Activated CD4-positive, alpha-beta memory T cell treated with anti-CD3 and anti-CD28 coated beads for 36 hours (primary cell): ENCODE measurements at regions of chr13 and their contacts with region 1.

Region 1: DNA sequence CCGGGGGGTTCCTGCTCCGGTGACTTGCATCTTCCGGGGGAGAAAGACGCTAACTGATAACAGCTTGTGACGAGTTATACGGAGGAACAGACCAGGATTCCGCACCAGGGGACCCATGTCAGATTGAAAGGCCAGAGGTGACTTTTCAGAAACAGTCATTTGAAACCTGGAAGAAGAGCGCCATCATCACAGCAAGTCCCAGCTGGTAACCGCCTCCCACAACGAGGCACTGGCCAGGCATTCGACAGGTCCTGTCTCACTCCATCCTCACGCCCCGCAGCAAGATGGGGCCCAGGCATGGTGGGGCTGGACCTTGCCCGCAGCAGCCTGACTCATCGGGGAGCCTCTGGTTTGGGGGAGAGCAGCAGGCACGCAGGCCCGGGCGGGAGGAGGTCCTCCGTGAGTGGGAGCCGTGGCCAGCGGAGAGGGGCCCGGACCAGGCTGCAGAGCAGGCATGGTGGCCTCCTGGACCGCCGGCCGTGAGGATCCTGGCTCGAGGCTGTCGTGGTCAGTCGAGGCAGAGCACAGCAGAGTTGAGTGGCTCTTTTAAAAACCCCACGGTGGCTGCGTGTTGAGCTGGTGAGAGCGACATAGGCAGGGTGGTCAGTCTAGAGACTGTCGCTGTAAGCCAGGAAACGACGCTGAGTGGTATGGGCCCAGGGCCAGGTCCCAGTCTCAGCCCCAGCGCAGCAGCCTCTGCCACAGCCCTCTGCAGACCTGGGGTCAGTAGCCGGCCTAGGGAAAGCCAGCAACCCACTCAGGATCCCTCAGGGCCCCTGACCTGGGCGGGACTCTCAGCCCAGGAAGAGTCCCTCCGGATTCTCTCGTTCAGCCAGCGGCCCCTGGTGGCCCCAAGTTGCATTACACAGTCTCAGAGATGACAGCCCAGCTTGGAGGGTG is 94.9 kb upstream of the MCF2L start:
- DNase-seq: peak; percentile 82
- H3K4me3 Mint-ChIP-seq: no peak overlapping the region
- H3K27ac Mint-ChIP-seq: peak overlapping the region; percentile 72
- H3K4me1 Mint-ChIP-seq: peaks cover 20% of the 10 kb centered on the region
- H3K27me3 Mint-ChIP-seq: no peaks in the 10 kb centered on the region

Region 2: GRCh38 chr13:112616586-112617362 is 257.3 kb before region 1 on chr13:
- CTCF ChIA-PET with region 1: interaction called, 7 read pairs
- POLR2A ChIA-PET with region 1: no interaction called
- intact Hi-C with region 1: loop called (anchors 1 kb)
- DNase-seq: peak; percentile 41
- H3K4me3 Mint-ChIP-seq: no peak overlapping the region
- H3K27ac Mint-ChIP-seq: no peak overlapping the region
- H3K4me1 Mint-ChIP-seq: no peaks in the 10 kb centered on the region
- H3K27me3 Mint-ChIP-seq: peaks cover 8% of the 10 kb centered on the region

Region 3: DNA sequence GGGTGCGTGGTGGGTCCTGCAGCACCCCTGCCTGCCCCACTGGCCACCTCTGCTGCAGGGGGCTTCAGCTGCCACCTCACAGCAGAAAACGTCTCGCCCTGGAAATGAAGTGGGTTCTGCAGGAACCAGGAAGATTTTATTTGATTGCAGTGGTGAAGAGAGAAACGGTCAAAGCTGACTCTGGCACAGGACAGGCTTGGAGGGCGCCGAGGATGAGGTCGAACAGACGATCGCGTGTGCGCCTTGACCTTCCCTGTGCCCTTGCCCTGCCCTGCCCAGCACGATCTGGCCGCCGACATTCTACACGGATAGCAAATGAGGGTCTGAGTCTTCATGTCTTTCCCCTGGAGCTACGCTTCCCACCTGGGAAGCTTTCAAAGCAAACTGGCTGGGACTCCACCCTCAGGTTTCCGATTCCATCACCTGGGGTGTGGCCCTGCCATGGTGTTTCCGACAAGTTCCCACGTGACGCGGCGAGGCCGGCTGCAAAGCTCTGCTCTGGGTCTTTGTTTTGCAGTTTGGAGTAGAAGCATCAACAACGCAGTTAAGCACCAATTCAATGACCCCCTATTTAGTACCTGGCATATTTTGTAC is 235.8 kb before region 1 on chr13:
- CTCF ChIA-PET with region 1: interaction called, 40 read pairs
- POLR2A ChIA-PET with region 1: no interaction called
- intact Hi-C with region 1: loop called (anchors 1 kb)
- DNase-seq: no peak
- H3K4me3 Mint-ChIP-seq: no peak overlapping the region
- H3K27ac Mint-ChIP-seq: no peak overlapping the region
- H3K4me1 Mint-ChIP-seq: peaks cover 5% of the 10 kb centered on the region
- H3K27me3 Mint-ChIP-seq: peaks cover 25% of the 10 kb centered on the region

Region 4: DNA sequence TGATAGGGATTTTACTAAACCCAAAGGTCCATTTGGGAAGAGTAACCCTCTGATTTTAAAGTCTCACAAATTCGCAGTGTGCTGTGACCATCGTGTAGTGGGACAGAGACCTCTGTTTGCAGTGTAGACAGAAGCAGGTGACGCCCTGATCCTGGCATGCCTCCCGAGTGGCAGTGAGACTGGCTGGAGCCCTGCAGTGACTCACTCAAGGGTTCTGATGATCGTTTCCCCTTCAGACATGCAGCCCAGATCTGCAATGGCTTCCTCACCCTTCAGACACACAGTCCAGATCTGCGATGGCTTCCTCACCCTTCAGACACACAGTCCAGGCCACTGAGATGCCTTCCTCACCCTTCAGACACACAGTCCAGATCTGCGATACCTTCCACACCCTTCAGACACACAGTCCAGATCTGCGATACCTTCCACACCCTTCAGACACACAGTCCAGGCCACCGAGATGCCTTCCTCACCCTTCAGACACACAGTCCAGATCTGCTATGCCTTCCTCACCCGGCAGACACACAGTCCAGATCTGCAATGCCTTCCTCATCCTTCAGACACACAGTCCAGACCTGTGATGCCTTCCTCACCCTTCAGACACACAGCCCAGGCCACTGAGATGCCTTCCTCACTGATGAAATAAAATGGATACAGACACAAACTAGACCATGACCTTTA is 59.1 kb before region 1 on chr13:
- CTCF ChIA-PET with region 1: no interaction called
- POLR2A ChIA-PET with region 1: no interaction called
- intact Hi-C with region 1: no loop called
- DNase-seq: no peak
- H3K4me3 Mint-ChIP-seq: no peak overlapping the region
- H3K27ac Mint-ChIP-seq: no peak overlapping the region
- H3K4me1 Mint-ChIP-seq: no peaks in the 10 kb centered on the region
- H3K27me3 Mint-ChIP-seq: no peaks in the 10 kb centered on the region